Heart right ventricle (tissue), 16 donors: ENCODE measurements at regions of chr11 and their contacts with region 1.

Region 1: GRCh38 chr11:43643898-43644620 is 36.5 kb upstream of the HSD17B12 start:
- DNase-seq: peak; percentile 85 to 87
- ATAC-seq: peak; percentile 99 to 100 (median 100)
- H3K4me3 ChIP-seq: peak overlapping the region; percentile 65 to 95 (median 88)
- H3K27ac ChIP-seq: peak overlapping the region in 9 of 10 donors; percentile 69 to 92 (median 82)
- H3K4me1 ChIP-seq: peaks cover 3 to 18% (median 15%) of the 10 kb centered on the region in 9 donors
- H3K27me3 ChIP-seq: peaks cover 5 to 40% (median 30%) of the 10 kb centered on the region in 7 donors
- CTCF ChIP-seq: peak in 2 of 9 donors; percentile 9 to 21

Region 2: DNA sequence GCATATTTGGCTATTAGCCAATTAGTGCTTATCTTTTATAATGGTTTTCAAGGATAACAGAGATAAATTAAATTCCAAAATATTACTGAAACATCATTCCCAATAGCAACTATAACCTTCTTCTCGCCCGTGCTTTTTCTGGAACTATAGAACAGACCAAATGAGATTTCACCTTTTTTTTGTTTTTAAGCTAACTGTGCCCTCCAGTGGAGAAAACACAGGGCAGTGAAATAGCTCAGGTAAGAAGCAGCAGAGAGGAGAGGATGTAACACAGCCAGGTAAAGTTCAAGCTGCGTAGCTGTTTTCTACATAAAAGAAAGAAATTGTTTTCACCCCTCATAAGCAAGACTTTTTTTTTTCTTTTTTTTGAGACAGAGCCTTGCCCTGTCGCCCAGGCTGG is 64.7 kb after region 1 on chr11:
- intact Hi-C with region 1: loop called in 1 of 10 experiments (anchors 10 kb)
- DNase-seq: no peak
- ATAC-seq: no peak
- H3K4me3 ChIP-seq: no peak overlapping the region
- H3K27ac ChIP-seq: no peak overlapping the region
- H3K4me1 ChIP-seq: peaks cover 0 to 3% (median 0%) of the 10 kb centered on the region in 9 donors
- H3K27me3 ChIP-seq: no peaks in the 10 kb centered on the region
- CTCF ChIP-seq: peak in 8 of 9 donors; percentile 15 to 64 (median 50)

Region 3: GRCh38 chr11:43810929-43811596 is 167.0 kb after region 1 on chr11:
- intact Hi-C with region 1: loop called in 1 of 10 experiments (anchors 5 kb)
- DNase-seq: no peak
- ATAC-seq: peak in 1 of 8 donors; percentile 31
- H3K4me3 ChIP-seq: no peak overlapping the region
- H3K27ac ChIP-seq: no peak overlapping the region
- H3K4me1 ChIP-seq: no peaks in the 10 kb centered on the region
- H3K27me3 ChIP-seq: no peaks in the 10 kb centered on the region
- CTCF ChIP-seq: peak in 8 of 9 donors; percentile 36 to 62 (median 46)